ENCODE measurements at regions of chr6 and their contacts with region 1.

Region 1: DNA sequence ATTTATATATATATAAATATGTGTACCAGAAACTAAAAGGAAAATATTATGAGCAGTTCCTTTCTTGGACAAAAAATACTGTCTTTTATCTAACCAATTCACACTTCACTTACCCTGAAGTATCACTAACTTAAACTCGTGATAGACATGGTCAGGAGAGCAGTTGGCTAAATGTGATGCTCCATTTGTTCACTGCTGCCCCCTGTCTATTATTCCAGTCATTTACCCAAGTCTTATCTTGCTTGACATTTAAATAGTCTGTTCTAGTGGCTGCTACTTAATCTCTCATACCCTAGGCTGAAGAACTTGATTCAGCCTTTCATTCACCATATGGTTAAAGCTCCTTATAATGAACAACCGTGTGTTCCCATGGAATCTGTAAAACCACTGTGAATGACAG is 789.6 kb upstream of the EYS start:
- DNase-seq: no peak
- H3K4me3 ChIP-seq: no peak overlapping the region
- H3K27ac ChIP-seq: no peak overlapping the region
- H3K4me1 ChIP-seq: no peaks in the 10 kb centered on the region
- H3K27me3 ChIP-seq: no peaks in the 10 kb centered on the region
- CTCF ChIP-seq: peak in 2 of 3 experiments; percentile 53 to 70; a peak in 3 of 4 replicates
- EP300 ChIP-seq: no peak
- POLR2A ChIP-seq: no peak
- RAD21 ChIP-seq: peak; percentile 72 to 73

Region 2: GRCh38 chr6:64630901-64631300 is 1865.8 kb before region 1 on chr6:
- CTCF ChIA-PET with region 1: no interaction called
- POLR2A ChIA-PET with region 1: no interaction called
- DNase-seq: no peak
- H3K4me3 ChIP-seq: no peak overlapping the region
- H3K27ac ChIP-seq: no peak overlapping the region
- H3K4me1 ChIP-seq: peaks cover 0 to 5% (median 0%) of the 10 kb centered on the region in 4 experiments; a peak in 3 of 7 replicates
- H3K27me3 ChIP-seq: no peaks in the 10 kb centered on the region
- CTCF ChIP-seq: no peak
- EP300 ChIP-seq: no peak
- POLR2A ChIP-seq: no peak
- RAD21 ChIP-seq: no peak

Region 3: GRCh38 chr6:66478705-66479104 is 18.0 kb before region 1 on chr6:
- CTCF ChIA-PET with region 1: interaction called, 13 read pairs
- POLR2A ChIA-PET with region 1: no interaction called
- DNase-seq: no peak
- H3K4me3 ChIP-seq: no peak overlapping the region
- H3K27ac ChIP-seq: no peak overlapping the region
- H3K4me1 ChIP-seq: no peaks in the 10 kb centered on the region
- H3K27me3 ChIP-seq: no peaks in the 10 kb centered on the region
- CTCF ChIP-seq: no peak
- EP300 ChIP-seq: no peak
- POLR2A ChIP-seq: no peak
- RAD21 ChIP-seq: no peak

Region 4: GRCh38 chr6:66508433-66508832 is 11.8 kb after region 1 on chr6:
- CTCF ChIA-PET with region 1: interaction called, 12 read pairs
- POLR2A ChIA-PET with region 1: no interaction called
- DNase-seq: no peak
- H3K4me3 ChIP-seq: no peak overlapping the region
- H3K27ac ChIP-seq: no peak overlapping the region; the same call in 1 of the 2 replicates
- H3K4me1 ChIP-seq: no peaks in the 10 kb centered on the region
- H3K27me3 ChIP-seq: no peaks in the 10 kb centered on the region
- CTCF ChIP-seq: no peak
- EP300 ChIP-seq: no peak
- POLR2A ChIP-seq: no peak
- RAD21 ChIP-seq: no peak

Region 5: DNA sequence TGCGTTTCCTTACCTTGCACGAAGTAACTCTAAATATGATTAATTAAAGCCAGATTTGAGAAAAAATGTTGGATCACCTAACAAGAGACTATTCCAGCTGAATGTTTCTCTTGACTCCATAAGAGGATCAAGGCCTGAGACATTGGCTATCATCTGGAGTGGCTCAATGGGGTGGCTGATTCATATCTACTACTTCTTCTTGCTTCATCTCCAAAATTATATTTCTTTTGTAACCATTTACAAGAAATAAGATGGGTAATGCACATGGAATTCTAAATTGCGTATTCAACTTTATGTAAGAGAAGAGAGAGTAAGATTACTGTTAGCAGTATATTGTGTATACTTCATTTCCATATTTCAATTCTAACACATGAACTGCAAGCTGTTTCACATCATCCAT is 29.4 kb after region 1 on chr6:
- CTCF ChIA-PET with region 1: no interaction called
- POLR2A ChIA-PET with region 1: no interaction called
- DNase-seq: no peak
- H3K4me3 ChIP-seq: no peak overlapping the region
- H3K27ac ChIP-seq: no peak overlapping the region
- H3K4me1 ChIP-seq: no peaks in the 10 kb centered on the region
- H3K27me3 ChIP-seq: no peaks in the 10 kb centered on the region
- CTCF ChIP-seq: no peak
- EP300 ChIP-seq: no peak
- POLR2A ChIP-seq: no peak
- RAD21 ChIP-seq: no peak

Measured in H1 (cell line).